ENCODE measurements at regions of chr15 and their contacts with region 1.

Region 1: GRCh38 chr15:75647370-75648155 is at the start of gene SNX33:
- DNase-seq: peak; percentile 88
- H3K4me3 ChIP-seq: peak within 1 kb of the TSS; percentile 66
- H3K4me3 Mint-ChIP-seq: peak within 1 kb of the TSS; percentile 75
- H3K27ac Mint-ChIP-seq: peak within 1 kb of the TSS; percentile 89
- H3K4me1 ChIP-seq: peaks cover 45% of the 10 kb centered on the region
- H3K4me1 Mint-ChIP-seq: peaks cover 24% of the 10 kb centered on the region
- H3K27me3 ChIP-seq: no peaks in the 10 kb centered on the region
- H3K27me3 Mint-ChIP-seq: no peaks in the 10 kb centered on the region
- CTCF ChIP-seq: peak in 1 of 2 experiments; percentile 51
- total RNA-seq, gene SNX33: 17.9 and 19.4 TPM in 2 replicates

Region 2: GRCh38 chr15:75389791-75390382 is 257.7 kb before region 1 on chr15:
- CTCF ChIA-PET with region 1: no interaction called
- POLR2A ChIA-PET with region 1: no interaction called
- intact Hi-C with region 1: no loop called
- DNase-seq: no peak
- H3K4me3 ChIP-seq: no peak overlapping the region
- H3K4me3 Mint-ChIP-seq: no peak overlapping the region
- H3K27ac Mint-ChIP-seq: peak overlapping the region; percentile 68
- H3K4me1 ChIP-seq: peaks cover 9% of the 10 kb centered on the region; the same call in 1 of the 2 replicates
- H3K4me1 Mint-ChIP-seq: peaks cover 6% of the 10 kb centered on the region
- H3K27me3 ChIP-seq: no peaks in the 10 kb centered on the region
- H3K27me3 Mint-ChIP-seq: no peaks in the 10 kb centered on the region
- CTCF ChIP-seq: no peak

Region 3: GRCh38 chr15:75616764-75617163 is 30.8 kb before region 1 on chr15:
- CTCF ChIA-PET with region 1: no interaction called
- POLR2A ChIA-PET with region 1: no interaction called
- intact Hi-C with region 1: no loop called
- DNase-seq: no peak
- H3K4me3 ChIP-seq: no peak overlapping the region
- H3K4me3 Mint-ChIP-seq: no peak overlapping the region
- H3K27ac Mint-ChIP-seq: no peak overlapping the region
- H3K4me1 ChIP-seq: no peaks in the 10 kb centered on the region
- H3K4me1 Mint-ChIP-seq: no peaks in the 10 kb centered on the region
- H3K27me3 ChIP-seq: no peaks in the 10 kb centered on the region
- H3K27me3 Mint-ChIP-seq: no peaks in the 10 kb centered on the region
- CTCF ChIP-seq: no peak

Region 4: GRCh38 chr15:75661091-75661777 is 13.7 kb after region 1 on chr15:
- CTCF ChIA-PET with region 1: interaction called, 17 read pairs
- POLR2A ChIA-PET with region 1: interaction called, 9 read pairs
- intact Hi-C with region 1: loop called (anchors 2 kb)
- DNase-seq: peak; percentile 59 to 60
- H3K4me3 ChIP-seq: no peak overlapping the region
- H3K4me3 Mint-ChIP-seq: no peak overlapping the region
- H3K27ac Mint-ChIP-seq: peak overlapping the region; percentile 5
- H3K4me1 ChIP-seq: peaks cover 56% of the 10 kb centered on the region
- H3K4me1 Mint-ChIP-seq: peaks cover 54% of the 10 kb centered on the region
- H3K27me3 ChIP-seq: no peaks in the 10 kb centered on the region
- H3K27me3 Mint-ChIP-seq: no peaks in the 10 kb centered on the region
- CTCF ChIP-seq: no peak